ENCODE measurements at regions of chr12 and their contacts with region 1.

Region 1: DNA sequence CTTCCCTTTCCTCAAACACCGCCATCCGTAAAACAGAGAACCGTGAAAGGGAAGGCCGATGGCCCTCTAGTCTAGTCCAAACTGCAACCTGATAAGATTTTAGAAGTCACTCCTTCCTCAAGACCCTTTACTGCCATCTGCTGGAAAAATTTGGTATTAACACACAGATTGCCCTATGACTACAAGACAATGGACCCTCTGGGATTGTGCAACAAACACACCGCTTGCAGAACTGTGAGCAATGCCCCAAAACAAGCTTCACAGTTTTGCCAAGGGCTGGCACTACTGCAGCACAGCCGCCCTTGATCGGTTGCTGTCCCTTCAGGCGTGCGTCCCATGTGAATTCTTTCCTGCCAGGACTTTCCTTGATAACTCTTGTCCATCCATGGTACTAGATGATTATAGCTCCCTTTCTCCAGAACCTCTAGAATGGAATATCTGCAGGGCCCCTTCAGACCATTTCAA is 23.1 kb downstream of the LLPH start:
- DNase-seq: no peak
- H3K4me3 ChIP-seq: no peak overlapping the region
- H3K27ac ChIP-seq: no peak overlapping the region
- H3K4me1 ChIP-seq: no peaks in the 10 kb centered on the region
- H3K27me3 ChIP-seq: no peaks in the 10 kb centered on the region
- CTCF ChIP-seq: peak; percentile 50 to 79 (median 75)
- POLR2A ChIP-seq: no peak

Region 2: DNA sequence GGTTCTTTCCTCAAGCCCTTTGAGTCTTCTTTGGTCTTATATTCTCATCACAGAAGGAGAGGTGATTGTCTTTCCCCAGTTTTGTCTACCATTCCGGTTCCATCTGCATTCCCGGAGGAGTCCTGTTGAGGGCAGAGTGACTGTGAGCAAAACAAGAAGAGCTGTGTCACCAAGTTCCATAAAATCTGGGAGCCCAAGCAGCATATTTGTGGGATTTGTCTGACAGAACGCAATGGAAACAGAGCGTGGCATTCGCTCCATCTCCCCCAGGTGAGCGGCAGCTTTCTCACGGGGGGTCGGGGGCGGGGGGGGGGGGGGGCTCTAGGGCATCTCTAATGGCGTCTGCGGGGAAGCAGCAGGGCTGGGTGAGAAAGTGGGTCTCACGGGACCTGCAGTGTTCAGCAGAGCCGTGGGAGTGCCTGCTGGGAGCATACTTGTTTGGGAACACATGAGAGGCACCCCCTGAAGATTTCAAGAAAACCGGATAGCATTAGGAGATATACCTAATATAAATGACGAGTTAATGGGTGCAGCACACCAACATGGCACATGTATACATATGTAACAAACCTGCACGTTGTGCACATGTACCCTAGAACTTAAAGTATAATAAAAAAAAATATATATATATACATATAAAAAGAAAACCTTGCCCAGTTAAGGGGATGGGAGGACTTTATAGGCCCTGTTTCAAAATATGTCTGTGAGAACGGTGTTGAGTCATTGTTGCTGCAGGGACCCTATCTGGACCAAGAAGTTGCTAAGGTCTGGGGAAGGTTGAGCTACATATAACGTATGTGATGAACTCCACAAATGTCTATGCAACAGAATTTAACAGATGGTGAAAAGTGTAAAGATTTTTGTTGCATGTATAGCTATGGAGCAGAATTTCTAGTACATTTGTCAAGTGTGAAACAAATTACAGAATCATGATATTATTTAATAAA is 1223.6 kb before region 1 on chr12:
- intact Hi-C with region 1: loop called (anchors 10 kb)
- DNase-seq: no peak
- H3K4me3 ChIP-seq: no peak overlapping the region
- H3K27ac ChIP-seq: no peak overlapping the region
- H3K4me1 ChIP-seq: no peaks in the 10 kb centered on the region
- H3K27me3 ChIP-seq: no peaks in the 10 kb centered on the region
- CTCF ChIP-seq: no peak
- POLR2A ChIP-seq: no peak

Region 3: DNA sequence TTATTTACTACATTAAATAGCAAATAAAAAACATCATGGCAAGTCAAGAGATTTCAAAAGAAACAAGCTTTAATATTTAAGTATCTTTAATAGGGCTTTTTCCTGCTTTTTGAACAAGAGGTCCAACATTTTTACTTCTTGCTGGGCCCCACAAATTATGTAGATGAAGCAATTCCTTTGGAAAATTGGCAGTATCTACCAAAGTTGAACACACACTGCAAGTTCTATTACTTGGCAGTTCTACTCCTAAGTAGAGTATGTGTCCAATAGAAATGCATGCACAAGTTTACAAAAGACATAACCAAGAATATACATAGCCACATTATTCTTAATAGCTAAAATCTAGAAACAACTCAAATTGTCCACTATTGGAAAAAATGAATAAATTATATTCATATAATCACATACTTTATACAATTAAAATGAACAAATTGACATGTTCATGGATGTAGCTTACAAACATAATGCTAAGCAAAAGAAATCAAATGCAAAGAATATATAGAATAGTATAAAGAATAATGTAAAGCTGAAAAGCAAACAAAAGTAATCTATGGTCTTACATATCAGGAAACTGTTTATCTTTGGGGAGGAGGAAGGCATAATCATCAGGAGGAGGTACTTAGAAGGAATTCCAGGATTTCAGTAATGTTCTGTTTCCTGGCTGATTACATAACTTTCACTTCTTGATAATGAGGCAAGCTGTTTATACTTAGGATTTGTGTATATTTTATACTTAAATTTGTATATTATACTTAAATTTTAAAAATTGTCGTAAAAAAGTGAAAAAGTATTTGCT is 68.8 kb after region 1 on chr12:
- intact Hi-C with region 1: no loop called
- DNase-seq: no peak
- H3K4me3 ChIP-seq: no peak overlapping the region
- H3K27ac ChIP-seq: no peak overlapping the region
- H3K4me1 ChIP-seq: no peaks in the 10 kb centered on the region
- H3K27me3 ChIP-seq: no peaks in the 10 kb centered on the region
- CTCF ChIP-seq: no peak
- POLR2A ChIP-seq: no peak

Measured in vagina (tissue), 2 donors.